OCI-LY7 (cell line): ENCODE measurements at regions of chr11 and their contacts with region 1.

Region 1: GRCh38 chr11:83007909-83008580 is 63.7 kb downstream of the RAB30 start:
- DNase-seq: peak; percentile 54
- H3K4me3 ChIP-seq: peak overlapping the region; percentile 0
- H3K27ac ChIP-seq: peak overlapping the region; percentile 47
- H3K4me1 ChIP-seq: peaks cover 49% of the 10 kb centered on the region
- CTCF ChIP-seq: peak; percentile 34; the same call in 1 of the 2 replicates

Region 2: DNA sequence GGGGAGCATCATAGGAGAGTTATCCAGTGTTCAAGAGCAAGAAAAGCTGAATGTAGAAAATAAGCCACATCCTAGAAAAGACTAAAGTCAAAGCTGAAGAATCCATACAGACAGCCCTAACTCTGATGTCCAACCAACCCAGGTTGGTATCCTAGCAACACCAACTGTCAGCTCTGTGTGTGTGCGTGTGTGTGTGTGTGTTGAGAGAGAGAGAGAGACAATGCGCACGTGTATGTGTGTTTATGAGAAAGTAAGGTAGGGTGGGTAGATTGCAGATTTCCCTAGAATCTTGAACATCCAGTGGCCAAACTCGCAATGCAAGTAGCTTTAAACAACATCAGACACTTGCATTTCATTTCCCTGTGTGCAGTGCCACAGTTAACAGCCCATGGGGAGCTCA is 549.3 kb before region 1 on chr11:
- CTCF ChIA-PET with region 1: no interaction called
- POLR2A ChIA-PET with region 1: no interaction called
- intact Hi-C with region 1: no loop called
- DNase-seq: no peak
- H3K4me3 ChIP-seq: no peak overlapping the region
- H3K27ac ChIP-seq: no peak overlapping the region
- H3K4me1 ChIP-seq: no peaks in the 10 kb centered on the region
- CTCF ChIP-seq: no peak

Region 3: DNA sequence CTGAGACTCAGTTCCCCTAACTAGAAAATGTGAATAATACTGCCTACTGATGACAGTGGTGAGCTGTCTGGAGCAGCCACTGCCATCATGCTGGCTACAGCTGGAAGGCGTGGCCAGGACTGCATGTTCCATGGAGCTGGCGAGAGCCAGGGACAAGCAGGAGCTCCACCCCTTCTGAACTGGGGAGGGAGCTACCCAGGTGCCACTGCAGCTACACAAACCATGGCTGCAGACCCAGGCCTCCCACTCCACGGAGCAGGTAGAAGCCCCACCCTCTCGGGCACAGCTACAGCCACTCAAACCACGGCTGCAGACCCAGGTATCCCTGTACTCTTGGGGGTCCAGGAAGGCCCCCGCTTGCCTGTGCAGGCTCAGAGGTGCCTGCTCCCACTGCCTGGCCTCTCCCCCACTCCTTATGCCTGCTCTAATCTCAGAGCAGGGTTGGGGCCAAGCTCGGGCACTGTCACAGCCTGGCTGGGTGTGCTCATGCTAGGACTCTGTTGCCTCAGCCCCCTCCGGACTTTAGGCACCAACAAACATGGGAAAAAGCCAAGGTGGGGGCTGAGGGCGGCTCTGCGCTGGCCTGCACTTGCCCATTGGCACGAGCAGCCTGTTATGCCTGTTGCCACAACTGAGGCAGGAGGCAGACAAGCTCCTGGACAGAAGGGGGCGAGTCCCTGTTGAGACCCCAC is 12.0 kb after region 1 on chr11:
- CTCF ChIA-PET with region 1: interaction called, 5 read pairs
- POLR2A ChIA-PET with region 1: interaction called, 23 read pairs
- intact Hi-C with region 1: no loop called
- DNase-seq: no peak
- H3K4me3 ChIP-seq: no peak overlapping the region
- H3K27ac ChIP-seq: no peak overlapping the region
- H3K4me1 ChIP-seq: peaks cover 27% of the 10 kb centered on the region
- CTCF ChIP-seq: no peak